ENCODE measurements at regions of chr2 and their contacts with region 1.

Region 1: GRCh38 chr2:46690825-46691224 is 211.5 kb downstream of the TMEM247 start:
- DNase-seq: no peak
- ATAC-seq: no peak
- H3K4me3 ChIP-seq: no peak overlapping the region
- H3K4me3 Mint-ChIP-seq: no peak overlapping the region
- H3K27ac ChIP-seq: no peak overlapping the region
- H3K27ac Mint-ChIP-seq: no peak overlapping the region
- H3K4me1 ChIP-seq: no peaks in the 10 kb centered on the region
- H3K4me1 Mint-ChIP-seq: no peaks in the 10 kb centered on the region
- H3K27me3 ChIP-seq: no peaks in the 10 kb centered on the region
- H3K27me3 Mint-ChIP-seq: peaks cover 18% of the 10 kb centered on the region
- CTCF ChIP-seq: no peak

Region 2: GRCh38 chr2:46050489-46050888 is 640.3 kb before region 1 on chr2:
- CTCF ChIA-PET with region 1: no interaction called
- POLR2A ChIA-PET with region 1: no interaction called
- intact Hi-C with region 1: no loop called
- DNase-seq: no peak
- ATAC-seq: no peak
- H3K4me3 ChIP-seq: no peak overlapping the region
- H3K4me3 Mint-ChIP-seq: no peak overlapping the region
- H3K27ac ChIP-seq: no peak overlapping the region
- H3K27ac Mint-ChIP-seq: no peak overlapping the region
- H3K4me1 ChIP-seq: no peaks in the 10 kb centered on the region
- H3K4me1 Mint-ChIP-seq: no peaks in the 10 kb centered on the region
- H3K27me3 ChIP-seq: no peaks in the 10 kb centered on the region
- H3K27me3 Mint-ChIP-seq: no peaks in the 10 kb centered on the region
- CTCF ChIP-seq: no peak

Region 3: GRCh38 chr2:46632349-46632748 is 58.5 kb before region 1 on chr2:
- CTCF ChIA-PET with region 1: no interaction called
- POLR2A ChIA-PET with region 1: no interaction called
- intact Hi-C with region 1: loop called in 1 of 2 experiments (anchors 2 kb)
- DNase-seq: peak in 3 of 14 experiments; percentile 23 to 44 (median 41)
- ATAC-seq: no peak
- H3K4me3 ChIP-seq: no peak overlapping the region
- H3K4me3 Mint-ChIP-seq: no peak overlapping the region
- H3K27ac ChIP-seq: no peak overlapping the region
- H3K27ac Mint-ChIP-seq: no peak overlapping the region
- H3K4me1 ChIP-seq: peaks cover 3% of the 10 kb centered on the region
- H3K4me1 Mint-ChIP-seq: peaks cover 10% of the 10 kb centered on the region
- H3K27me3 ChIP-seq: no peaks in the 10 kb centered on the region
- H3K27me3 Mint-ChIP-seq: no peaks in the 10 kb centered on the region
- CTCF ChIP-seq: peak; percentile 30

Measured in CD4-positive, alpha-beta T cell (primary cell).